ENCODE measurements at regions of chr15 and their contacts with region 1.

Region 1: DNA sequence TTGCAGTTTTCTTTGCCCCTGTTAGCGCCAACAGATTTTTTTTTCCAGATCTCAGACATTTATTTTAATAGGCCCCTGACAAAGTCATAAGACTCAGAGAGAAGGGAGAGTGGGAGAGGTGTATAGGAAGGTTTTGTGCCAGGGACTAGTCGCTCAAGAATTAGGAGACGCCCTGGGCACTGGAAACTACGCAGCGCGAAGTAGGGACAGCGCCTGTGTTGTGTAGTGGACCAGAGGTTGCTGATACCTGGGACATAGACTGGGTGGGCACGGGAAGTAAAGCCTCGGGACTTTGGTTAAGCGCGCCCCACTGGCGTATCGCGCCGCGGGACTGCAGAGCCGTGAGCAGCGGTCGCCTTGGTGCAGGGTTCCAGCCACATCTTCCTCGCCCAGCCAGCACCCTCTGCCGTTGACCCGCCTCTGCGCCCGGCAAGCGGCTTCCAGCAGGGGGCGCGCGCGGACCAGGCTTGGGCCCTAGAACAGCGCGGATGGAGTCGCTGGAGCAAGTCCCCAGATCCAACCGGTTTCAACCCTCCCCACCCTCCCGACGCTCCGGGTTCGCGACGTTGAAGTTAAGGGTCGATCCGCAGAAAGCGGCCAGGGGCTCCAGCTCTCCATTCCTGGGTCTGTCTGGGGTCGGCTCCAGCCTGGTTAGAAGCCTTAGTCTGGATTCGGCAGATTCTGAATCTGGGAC is 3.0 kb upstream of the ISLR2 start:
- DNase-seq: peak; percentile 86
- ATAC-seq: peak; percentile 97
- H3K4me3 ChIP-seq: peak overlapping the region; percentile 68
- H3K27ac ChIP-seq: no peak overlapping the region
- H3K4me1 ChIP-seq: peaks cover 4% of the 10 kb centered on the region; the same call in 1 of the 2 replicates
- H3K27me3 ChIP-seq: peaks cover 70% of the 10 kb centered on the region
- CTCF ChIP-seq: peak; percentile 77

Region 2: GRCh38 chr15:74307827-74308644 is 180.6 kb after region 1 on chr15:
- CTCF ChIA-PET with region 1: interaction called, 18 read pairs
- POLR2A ChIA-PET with region 1: no interaction called
- intact Hi-C with region 1: loop called (anchors 1 kb)
- DNase-seq: peak; percentile 76
- ATAC-seq: peak; percentile 87
- H3K4me3 ChIP-seq: no peak overlapping the region
- H3K27ac ChIP-seq: no peak overlapping the region
- H3K4me1 ChIP-seq: no peaks in the 10 kb centered on the region
- H3K27me3 ChIP-seq: peaks cover 7% of the 10 kb centered on the region
- CTCF ChIP-seq: peak; percentile 78

Region 3: DNA sequence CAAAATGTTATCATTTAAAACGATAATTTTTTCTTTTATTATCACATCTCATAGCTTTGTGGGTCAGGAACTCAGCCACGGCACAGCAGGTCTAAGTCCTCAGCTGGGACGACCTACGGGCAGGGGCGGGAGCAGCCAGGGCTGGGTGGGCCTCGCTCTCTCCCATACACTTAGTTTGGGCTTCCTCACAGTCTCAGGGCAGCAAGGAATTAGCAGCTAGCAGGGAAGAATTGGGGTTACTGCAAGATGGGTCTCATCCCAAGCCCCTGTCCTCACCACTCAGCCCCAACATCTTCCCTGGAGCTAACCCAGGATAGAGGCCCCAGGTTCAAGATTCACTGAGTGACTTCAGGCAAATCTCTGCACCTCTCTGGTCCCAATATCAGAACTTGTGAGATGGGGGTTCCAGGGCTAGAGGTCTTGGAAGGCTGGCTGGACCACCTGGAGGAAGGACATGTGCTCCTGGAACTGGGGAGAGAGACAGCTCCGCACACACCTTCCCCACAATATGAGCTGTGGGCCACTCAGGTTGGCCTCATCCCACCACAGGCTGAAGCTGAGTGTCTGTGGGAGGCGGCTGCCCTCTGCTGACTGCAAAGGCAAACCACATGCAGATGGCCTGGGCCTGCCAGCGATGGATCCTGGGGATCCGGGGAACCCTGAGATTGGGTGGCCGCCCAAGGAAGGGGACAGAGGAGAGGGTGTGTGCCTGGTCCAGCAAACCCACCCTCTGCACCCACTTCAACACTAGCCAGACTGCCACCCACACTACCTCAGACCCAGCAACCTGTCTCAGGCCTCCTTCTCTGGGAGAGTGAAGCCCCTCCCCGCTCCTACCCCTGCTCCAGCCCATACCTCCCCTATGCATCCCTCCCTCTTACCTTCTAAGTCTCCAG is 195.0 kb after region 1 on chr15:
- CTCF ChIA-PET with region 1: interaction called, 3 read pairs
- POLR2A ChIA-PET with region 1: no interaction called
- intact Hi-C with region 1: loop called (anchors 5 kb)
- DNase-seq: peak; percentile 72
- ATAC-seq: peak; percentile 95
- H3K4me3 ChIP-seq: no peak overlapping the region
- H3K27ac ChIP-seq: no peak overlapping the region
- H3K4me1 ChIP-seq: no peaks in the 10 kb centered on the region
- H3K27me3 ChIP-seq: no peaks in the 10 kb centered on the region
- CTCF ChIP-seq: peak; percentile 90

Measured in PC-3 (cell line).